Naive thymus-derived CD4-positive, alpha-beta T cell (primary cell): ENCODE measurements at regions of chr2 and their contacts with region 1.

Region 1: GRCh38 chr2:199850718-199851500 is at the start of gene FTCDNL1:
- DNase-seq: peak; percentile 46 to 77 (median 65)
- ATAC-seq: peak; percentile 96
- H3K4me3 ChIP-seq: peak within 1 kb of the TSS; percentile 75
- H3K4me3 Mint-ChIP-seq: peak within 1 kb of the TSS; percentile 90 to 100 (median 94)
- H3K27ac ChIP-seq: peak within 1 kb of the TSS; percentile 44
- H3K27ac Mint-ChIP-seq: peak within 1 kb of the TSS; percentile 80 to 96 (median 89)
- H3K4me1 ChIP-seq: no peaks in the 10 kb centered on the region
- H3K4me1 Mint-ChIP-seq: peaks cover 0 to 10% (median 6%) of the 10 kb centered on the region in 7 donors
- H3K27me3 ChIP-seq: no peaks in the 10 kb centered on the region
- H3K27me3 Mint-ChIP-seq: peaks cover 0 to 20% (median 0%) of the 10 kb centered on the region in 5 donors
- total RNA-seq, gene FTCDNL1: 1.2 to 3.7 (median 2.6) TPM

Region 2: GRCh38 chr2:199704358-199705238 is 146.3 kb before region 1 on chr2:
- CTCF ChIA-PET with region 1: no interaction called
- POLR2A ChIA-PET with region 1: no interaction called
- intact Hi-C with region 1: no loop called
- DNase-seq: peak in 5 of 9 donors; percentile 5 to 27 (median 9)
- ATAC-seq: peak; percentile 74
- H3K4me3 ChIP-seq: no peak overlapping the region
- H3K4me3 Mint-ChIP-seq: no peak overlapping the region
- H3K27ac ChIP-seq: no peak overlapping the region
- H3K27ac Mint-ChIP-seq: no peak overlapping the region
- H3K4me1 ChIP-seq: no peaks in the 10 kb centered on the region
- H3K4me1 Mint-ChIP-seq: peaks cover 0 to 5% (median 0%) of the 10 kb centered on the region in 7 donors
- H3K27me3 ChIP-seq: no peaks in the 10 kb centered on the region
- H3K27me3 Mint-ChIP-seq: peaks cover 0 to 7% (median 5%) of the 10 kb centered on the region in 5 donors

Region 3: DNA sequence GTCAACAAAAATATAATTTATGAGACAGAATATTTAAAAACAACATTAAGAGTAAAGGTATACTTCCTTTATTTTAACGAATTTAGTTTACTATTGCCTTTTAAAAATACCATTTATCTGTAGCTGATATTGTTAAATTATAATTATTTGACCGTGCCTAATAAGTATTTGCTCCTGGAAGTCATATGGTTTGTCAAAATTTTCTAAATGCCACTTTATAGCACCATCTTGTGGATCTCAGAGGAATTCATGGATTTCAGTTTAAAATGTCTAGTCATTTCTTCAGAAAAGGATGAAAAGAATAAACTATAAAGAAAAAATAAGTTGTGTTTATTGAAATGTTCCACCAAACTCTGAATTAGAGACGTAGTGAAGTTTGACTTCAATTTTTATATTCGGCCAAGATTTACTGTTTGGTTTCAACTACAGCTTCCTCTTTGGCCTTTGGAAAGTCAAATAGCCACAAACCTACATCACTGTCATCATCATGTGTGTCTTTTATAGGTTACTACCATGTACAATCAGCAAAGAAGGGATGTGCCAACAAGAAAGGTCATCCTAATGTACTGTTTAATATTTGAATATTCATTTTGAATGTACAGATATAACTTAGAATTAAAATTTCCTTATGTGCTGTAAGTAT is 10.3 kb after region 1 on chr2:
- CTCF ChIA-PET with region 1: interaction called, 3 read pairs
- POLR2A ChIA-PET with region 1: no interaction called
- intact Hi-C with region 1: loop called in 1 of 2 experiments (anchors 1 kb)
- DNase-seq: peak in 1 of 9 donors; percentile 3
- ATAC-seq: peak; percentile 42
- H3K4me3 ChIP-seq: no peak overlapping the region
- H3K4me3 Mint-ChIP-seq: no peak overlapping the region
- H3K27ac ChIP-seq: no peak overlapping the region
- H3K27ac Mint-ChIP-seq: no peak overlapping the region
- H3K4me1 ChIP-seq: no peaks in the 10 kb centered on the region
- H3K4me1 Mint-ChIP-seq: no peaks in the 10 kb centered on the region
- H3K27me3 ChIP-seq: no peaks in the 10 kb centered on the region
- H3K27me3 Mint-ChIP-seq: peaks cover 6 to 57% (median 17%) of the 10 kb centered on the region in 5 donors

Region 4: GRCh38 chr2:199911052-199911876 is 60.4 kb after region 1 on chr2 and contains the start of gene C2orf69:
- CTCF ChIA-PET with region 1: no interaction called
- POLR2A ChIA-PET with region 1: no interaction called
- intact Hi-C with region 1: loop called (anchors 1 kb)
- DNase-seq: peak; percentile 80 to 92 (median 83)
- ATAC-seq: peak; percentile 93
- H3K4me3 ChIP-seq: peak within 1 kb of the TSS; percentile 75
- H3K4me3 Mint-ChIP-seq: peak within 1 kb of the TSS; percentile 89 to 100 (median 98)
- H3K27ac ChIP-seq: peak within 1 kb of the TSS; percentile 89
- H3K27ac Mint-ChIP-seq: peak within 1 kb of the TSS; percentile 72 to 95 (median 94)
- H3K4me1 ChIP-seq: peaks cover 11 to 19% of the 10 kb centered on the region in 2 donors
- H3K4me1 Mint-ChIP-seq: peaks cover 26 to 47% (median 37%) of the 10 kb centered on the region in 7 donors
- H3K27me3 ChIP-seq: no peaks in the 10 kb centered on the region
- H3K27me3 Mint-ChIP-seq: peaks cover 0 to 14% (median 8%) of the 10 kb centered on the region in 5 donors
- total RNA-seq, gene C2orf69: 10.1 to 15.4 (median 12.7) TPM

Region 5: DNA sequence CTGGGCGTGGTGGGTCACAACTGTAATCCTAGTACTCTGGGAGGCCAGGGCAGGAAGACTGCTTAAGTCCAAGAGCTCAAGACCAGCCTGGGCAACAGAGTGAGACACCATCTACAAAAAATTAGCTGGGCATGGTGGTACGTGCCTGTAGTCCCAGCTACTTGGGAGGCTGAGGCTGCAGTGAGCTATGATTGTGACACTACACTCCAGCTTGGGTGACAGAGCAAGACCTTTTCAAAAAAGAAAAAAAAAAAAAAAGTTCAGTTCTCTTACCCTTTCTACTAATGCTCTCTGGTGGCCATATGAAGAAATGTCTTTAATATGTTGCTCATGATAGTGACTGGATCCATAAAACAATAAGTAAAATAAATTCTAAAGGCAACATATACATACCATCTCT is 89.5 kb after region 1 on chr2:
- CTCF ChIA-PET with region 1: no interaction called
- POLR2A ChIA-PET with region 1: no interaction called
- intact Hi-C with region 1: loop called in 1 of 2 experiments (anchors 1 kb)
- DNase-seq: peak in 3 of 9 donors; percentile 9 to 18 (median 11)
- ATAC-seq: no peak
- H3K4me3 ChIP-seq: no peak overlapping the region
- H3K4me3 Mint-ChIP-seq: no peak overlapping the region
- H3K27ac ChIP-seq: no peak overlapping the region
- H3K27ac Mint-ChIP-seq: no peak overlapping the region
- H3K4me1 ChIP-seq: no peaks in the 10 kb centered on the region
- H3K4me1 Mint-ChIP-seq: peaks cover 0 to 19% (median 14%) of the 10 kb centered on the region in 7 donors
- H3K27me3 ChIP-seq: no peaks in the 10 kb centered on the region
- H3K27me3 Mint-ChIP-seq: no peaks in the 10 kb centered on the region

Region 6: GRCh38 chr2:199955339-199956261 is 104.7 kb after region 1 on chr2 and contains the starts of genes MAIP1 and TYW5:
- CTCF ChIA-PET with region 1: no interaction called
- POLR2A ChIA-PET with region 1: no interaction called
- intact Hi-C with region 1: loop called in 1 of 2 experiments (anchors 1 kb)
- DNase-seq: peak; percentile 69 to 85 (median 79)
- ATAC-seq: peak; percentile 93
- H3K4me3 ChIP-seq: peak within 1 kb of the TSS; percentile 95
- H3K4me3 Mint-ChIP-seq: peak within 1 kb of the TSS; percentile 96 to 99 (median 98)
- H3K27ac ChIP-seq: peak within 1 kb of the TSS; percentile 84
- H3K27ac Mint-ChIP-seq: peak within 1 kb of the TSS; percentile 93 to 98 (median 95)
- H3K4me1 ChIP-seq: peaks cover 27 to 34% of the 10 kb centered on the region in 2 donors
- H3K4me1 Mint-ChIP-seq: peaks cover 31 to 72% (median 59%) of the 10 kb centered on the region in 7 donors
- H3K27me3 ChIP-seq: no peaks in the 10 kb centered on the region
- H3K27me3 Mint-ChIP-seq: no peaks in the 10 kb centered on the region
- total RNA-seq, gene MAIP1: 14.5 to 27.8 (median 19.8) TPM
- total RNA-seq, gene TYW5: 6.3 to 13.3 (median 11.2) TPM

Region 7: DNA sequence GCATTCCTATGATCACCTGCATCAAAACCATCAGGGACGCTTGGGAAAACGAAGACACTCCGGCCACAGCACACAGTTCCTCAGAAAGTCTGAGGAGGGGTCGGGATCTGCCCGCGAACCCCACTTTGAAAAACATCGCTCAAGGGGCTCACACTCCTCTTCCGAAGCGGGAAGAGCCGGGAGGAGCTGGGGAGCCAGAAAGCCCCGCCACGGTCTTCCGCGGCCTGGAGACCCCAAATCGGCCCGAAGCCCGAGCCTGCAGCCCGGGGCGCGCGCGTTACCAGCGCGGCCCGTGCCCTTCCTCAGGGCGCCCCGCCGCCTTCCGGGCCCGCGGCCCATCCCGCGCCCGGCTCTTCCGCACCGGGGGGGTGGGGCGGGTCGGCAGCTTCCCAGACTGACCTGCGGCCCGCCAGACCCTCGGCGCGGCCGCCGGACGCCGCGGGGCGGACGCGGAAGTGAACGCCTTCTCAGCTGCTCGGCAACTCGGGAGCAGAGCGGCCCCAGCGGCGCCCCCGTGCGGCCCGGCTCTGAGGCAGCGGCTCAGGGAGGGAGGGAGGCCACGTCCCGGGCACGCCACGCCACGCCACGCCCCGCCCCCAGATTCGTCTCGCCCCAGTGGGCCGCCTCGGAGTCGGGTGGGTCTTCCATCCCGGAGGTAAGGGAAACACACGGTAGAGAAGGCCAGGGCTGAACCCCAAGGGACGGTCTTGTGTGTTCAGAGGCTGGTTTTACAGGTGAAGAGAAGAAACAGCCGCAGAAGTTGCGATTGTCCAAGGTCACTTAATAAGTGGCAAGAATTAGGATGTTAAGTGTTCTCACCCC is 658.9 kb after region 1 on chr2 and contains the start of gene KCTD18:
- CTCF ChIA-PET with region 1: no interaction called
- POLR2A ChIA-PET with region 1: no interaction called
- intact Hi-C with region 1: loop called in 1 of 2 experiments (anchors 2 kb)
- DNase-seq: peak; percentile 82 to 93 (median 87)
- ATAC-seq: peak; percentile 100
- H3K4me3 ChIP-seq: peak within 1 kb of the TSS; percentile 53
- H3K4me3 Mint-ChIP-seq: peak within 1 kb of the TSS; percentile 83 to 98 (median 94)
- H3K27ac ChIP-seq: peak within 1 kb of the TSS; percentile 74
- H3K27ac Mint-ChIP-seq: peak within 1 kb of the TSS; percentile 88 to 97 (median 95)
- H3K4me1 ChIP-seq: peaks cover 6 to 22% of the 10 kb centered on the region in 2 donors
- H3K4me1 Mint-ChIP-seq: peaks cover 10 to 51% (median 34%) of the 10 kb centered on the region in 7 donors
- H3K27me3 ChIP-seq: no peaks in the 10 kb centered on the region
- H3K27me3 Mint-ChIP-seq: no peaks in the 10 kb centered on the region
- total RNA-seq, gene KCTD18: 14.9 to 20.8 (median 18.6) TPM